Naive thymus-derived CD4-positive, alpha-beta T cell (primary cell): ENCODE measurements at regions of chrX and their contacts with region 1.

Region 1: GRCh38 chrX:139766545-139766983 is 58.6 kb upstream of the MCF2 start:
- DNase-seq: peak in 8 of 9 donors; percentile 10 to 61 (median 42)
- ATAC-seq: peak; percentile 81
- H3K4me3 ChIP-seq: no peak overlapping the region
- H3K4me3 Mint-ChIP-seq: no peak overlapping the region
- H3K27ac ChIP-seq: no peak overlapping the region
- H3K27ac Mint-ChIP-seq: no peak overlapping the region
- H3K4me1 ChIP-seq: peaks cover 0 to 13% of the 10 kb centered on the region in 2 donors
- H3K4me1 Mint-ChIP-seq: peaks cover 0 to 5% (median 0%) of the 10 kb centered on the region in 7 donors
- H3K27me3 ChIP-seq: no peaks in the 10 kb centered on the region
- H3K27me3 Mint-ChIP-seq: no peaks in the 10 kb centered on the region

Region 2: GRCh38 chrX:138945223-138945622 is 821.3 kb before region 1 on chrX:
- CTCF ChIA-PET with region 1: no interaction called
- POLR2A ChIA-PET with region 1: no interaction called
- intact Hi-C with region 1: no loop called
- DNase-seq: no peak
- ATAC-seq: no peak
- H3K4me3 ChIP-seq: no peak overlapping the region
- H3K4me3 Mint-ChIP-seq: no peak overlapping the region
- H3K27ac ChIP-seq: no peak overlapping the region
- H3K27ac Mint-ChIP-seq: no peak overlapping the region
- H3K4me1 ChIP-seq: no peaks in the 10 kb centered on the region
- H3K4me1 Mint-ChIP-seq: no peaks in the 10 kb centered on the region
- H3K27me3 ChIP-seq: no peaks in the 10 kb centered on the region
- H3K27me3 Mint-ChIP-seq: no peaks in the 10 kb centered on the region

Region 3: DNA sequence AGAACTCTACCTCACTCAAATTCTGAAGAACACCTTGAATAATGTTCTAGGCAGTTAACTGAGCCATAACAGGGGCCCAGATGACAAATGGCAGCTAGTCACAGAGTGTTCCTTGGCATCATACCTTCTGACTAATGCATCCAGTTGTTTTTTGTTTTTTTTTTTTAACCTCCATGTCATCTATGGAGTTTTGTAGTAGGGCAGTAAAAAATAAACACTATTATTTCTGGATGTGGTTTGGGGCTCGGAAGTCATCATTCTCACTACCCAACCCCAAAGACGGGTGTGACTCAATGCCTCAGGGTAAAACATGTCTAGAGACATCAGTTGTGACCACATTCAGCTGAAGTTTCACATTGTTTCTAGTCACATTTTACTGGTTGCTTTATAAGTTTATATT is 27.4 kb before region 1 on chrX:
- CTCF ChIA-PET with region 1: no interaction called
- POLR2A ChIA-PET with region 1: no interaction called
- intact Hi-C with region 1: loop called in 1 of 2 experiments (anchors 1 kb)
- DNase-seq: peak in 1 of 9 donors; percentile 21
- ATAC-seq: peak; percentile 47
- H3K4me3 ChIP-seq: no peak overlapping the region
- H3K4me3 Mint-ChIP-seq: peak overlapping the region in 2 of 10 donors; percentile 39 to 46
- H3K27ac ChIP-seq: no peak overlapping the region
- H3K27ac Mint-ChIP-seq: peak overlapping the region in 3 of 9 donors; percentile 39 to 73 (median 41)
- H3K4me1 ChIP-seq: peaks cover 0 to 5% of the 10 kb centered on the region in 2 donors
- H3K4me1 Mint-ChIP-seq: peaks cover 0 to 25% (median 0%) of the 10 kb centered on the region in 7 donors
- H3K27me3 ChIP-seq: no peaks in the 10 kb centered on the region
- H3K27me3 Mint-ChIP-seq: no peaks in the 10 kb centered on the region